HCT116 (cell line): ENCODE measurements at regions of chr5 and their contacts with region 1.

Region 1: GRCh38 chr5:32613050-32613672 is 27.8 kb downstream of the SUB1 start:
- DNase-seq: peak; percentile 64
- ATAC-seq: peak; percentile 86
- H3K4me3 ChIP-seq: no peak overlapping the region
- H3K27ac ChIP-seq: no peak overlapping the region
- H3K4me1 ChIP-seq: no peaks in the 10 kb centered on the region
- H3K27me3 ChIP-seq: no peaks in the 10 kb centered on the region
- CTCF ChIP-seq: peak; percentile 74 to 85 (median 82)
- POLR2A ChIP-seq: no peak
- RAD21 ChIP-seq: peak; percentile 80

Region 2: GRCh38 chr5:32232441-32233219 is 380.5 kb before region 1 on chr5:
- CTCF ChIA-PET with region 1: interaction called, 12 read pairs
- POLR2A ChIA-PET with region 1: no interaction called
- RAD21 ChIA-PET with region 1: no interaction called
- intact Hi-C with region 1: loop called (anchors 1 kb)
- DNase-seq: peak; percentile 41
- ATAC-seq: peak; percentile 94
- H3K4me3 ChIP-seq: no peak overlapping the region
- H3K27ac ChIP-seq: no peak overlapping the region
- H3K4me1 ChIP-seq: peaks cover 0 to 10% of the 10 kb centered on the region in 2 experiments; a peak in 2 of 4 replicates
- H3K27me3 ChIP-seq: no peaks in the 10 kb centered on the region
- CTCF ChIP-seq: peak; percentile 65 to 90 (median 79); a peak in 5 of 6 replicates
- POLR2A ChIP-seq: no peak
- RAD21 ChIP-seq: peak; percentile 82

Region 3: DNA sequence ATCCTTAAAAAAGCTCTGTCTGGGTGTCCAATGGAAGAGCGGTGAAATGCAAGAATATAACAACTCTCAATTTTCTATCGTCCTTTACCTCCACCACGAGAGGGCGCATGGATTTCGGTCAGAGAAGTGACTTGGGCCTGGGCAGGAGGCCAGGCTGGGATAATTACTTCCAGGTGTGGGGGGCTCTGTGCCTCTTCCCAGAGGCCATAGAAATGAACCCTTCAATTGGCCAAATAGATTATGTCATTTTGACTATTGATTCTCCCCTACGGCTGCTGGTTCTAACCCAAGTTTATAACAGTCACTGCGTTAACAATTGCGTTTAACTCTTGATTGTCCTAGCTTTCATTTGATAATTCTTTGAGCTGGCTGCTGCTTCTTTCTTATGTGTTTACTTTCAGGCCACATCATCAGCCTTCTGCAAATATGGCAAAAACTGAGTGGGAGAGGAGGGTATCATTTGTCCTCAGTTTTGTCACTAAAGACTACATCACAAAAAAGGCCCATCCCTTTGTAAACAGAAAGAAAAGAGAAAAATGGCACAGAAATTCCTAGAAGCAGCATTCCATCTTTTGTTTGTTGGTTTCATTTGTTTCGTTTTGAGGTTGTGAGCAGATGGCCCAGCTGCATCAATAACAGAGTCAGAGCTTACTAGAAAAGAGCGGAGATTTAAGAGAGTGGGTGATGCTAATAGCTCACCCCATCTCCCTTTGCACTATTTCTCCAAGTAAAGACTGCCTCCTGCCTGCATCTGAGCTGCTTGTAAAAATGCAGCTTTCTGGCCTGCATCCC is 123.2 kb before region 1 on chr5:
- CTCF ChIA-PET with region 1: interaction called, 19 read pairs
- POLR2A ChIA-PET with region 1: no interaction called
- RAD21 ChIA-PET with region 1: interaction called in 1 of 2 experiments, 3 read pairs
- intact Hi-C with region 1: loop called (anchors 1 kb)
- DNase-seq: peak; percentile 65
- ATAC-seq: peak; percentile 94
- H3K4me3 ChIP-seq: no peak overlapping the region
- H3K27ac ChIP-seq: no peak overlapping the region
- H3K4me1 ChIP-seq: no peaks in the 10 kb centered on the region
- H3K27me3 ChIP-seq: no peaks in the 10 kb centered on the region
- CTCF ChIP-seq: peak; percentile 73 to 85 (median 75); a peak in 5 of 6 replicates
- POLR2A ChIP-seq: no peak
- RAD21 ChIP-seq: peak; percentile 75

Region 4: DNA sequence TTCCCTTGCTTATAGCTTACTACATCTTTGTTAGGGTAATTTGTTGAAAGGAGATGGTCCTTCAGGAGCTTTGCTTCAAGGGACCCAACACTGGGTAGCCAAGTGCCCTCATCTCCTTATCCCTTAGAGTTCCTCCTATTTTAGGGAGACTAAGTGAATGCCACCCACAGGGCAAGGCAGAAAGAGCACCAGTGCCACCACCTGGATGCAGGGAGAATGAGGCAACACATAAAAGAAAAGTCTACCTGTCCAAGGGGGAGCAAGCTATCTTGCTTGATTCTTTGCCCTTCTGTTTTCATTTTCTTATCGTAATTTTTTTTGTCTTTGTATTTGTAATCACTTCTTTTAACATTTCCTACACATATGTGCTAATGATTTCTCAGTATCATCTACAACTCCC is 303.5 kb after region 1 on chr5:
- CTCF ChIA-PET with region 1: no interaction called
- POLR2A ChIA-PET with region 1: no interaction called
- RAD21 ChIA-PET with region 1: no interaction called
- intact Hi-C with region 1: loop called (anchors 2 kb)
- DNase-seq: peak; percentile 32
- ATAC-seq: peak; percentile 96
- H3K4me3 ChIP-seq: no peak overlapping the region
- H3K27ac ChIP-seq: no peak overlapping the region
- H3K4me1 ChIP-seq: no peaks in the 10 kb centered on the region
- H3K27me3 ChIP-seq: 0 out of 2 replicates have a peak, but pooled peaks cover 5% of the 10 kb centered on the region
- CTCF ChIP-seq: peak; percentile 61 to 72 (median 67); a peak in 5 of 6 replicates
- POLR2A ChIP-seq: no peak
- RAD21 ChIP-seq: peak; percentile 79

Region 5: DNA sequence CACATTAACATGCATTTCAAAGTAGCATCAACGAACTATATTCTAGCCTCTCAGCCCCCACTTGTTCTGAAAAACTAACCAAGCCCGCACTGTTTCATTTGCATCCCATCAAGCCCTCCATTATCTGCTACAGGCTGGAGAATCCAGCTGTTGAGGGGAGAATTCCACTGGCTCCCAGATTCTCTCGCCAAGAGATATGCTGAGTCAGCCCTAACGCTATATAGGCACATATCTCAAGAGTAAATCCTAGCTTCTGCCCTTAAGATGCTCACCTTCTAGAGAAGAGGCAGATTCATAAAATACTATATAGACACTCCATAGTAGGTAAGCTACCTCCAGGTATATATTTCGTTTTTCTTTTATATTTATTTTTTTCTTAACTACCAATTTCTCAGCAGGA is 561.2 kb after region 1 on chr5:
- CTCF ChIA-PET with region 1: no interaction called
- POLR2A ChIA-PET with region 1: no interaction called
- RAD21 ChIA-PET with region 1: no interaction called
- intact Hi-C with region 1: no loop called
- DNase-seq: no peak
- ATAC-seq: no peak
- H3K4me3 ChIP-seq: no peak overlapping the region
- H3K27ac ChIP-seq: no peak overlapping the region
- H3K4me1 ChIP-seq: no peaks in the 10 kb centered on the region
- H3K27me3 ChIP-seq: no peaks in the 10 kb centered on the region
- CTCF ChIP-seq: no peak
- POLR2A ChIP-seq: no peak
- RAD21 ChIP-seq: no peak